ENCODE measurements at regions of chr1 and their contacts with region 1.

Region 1: DNA sequence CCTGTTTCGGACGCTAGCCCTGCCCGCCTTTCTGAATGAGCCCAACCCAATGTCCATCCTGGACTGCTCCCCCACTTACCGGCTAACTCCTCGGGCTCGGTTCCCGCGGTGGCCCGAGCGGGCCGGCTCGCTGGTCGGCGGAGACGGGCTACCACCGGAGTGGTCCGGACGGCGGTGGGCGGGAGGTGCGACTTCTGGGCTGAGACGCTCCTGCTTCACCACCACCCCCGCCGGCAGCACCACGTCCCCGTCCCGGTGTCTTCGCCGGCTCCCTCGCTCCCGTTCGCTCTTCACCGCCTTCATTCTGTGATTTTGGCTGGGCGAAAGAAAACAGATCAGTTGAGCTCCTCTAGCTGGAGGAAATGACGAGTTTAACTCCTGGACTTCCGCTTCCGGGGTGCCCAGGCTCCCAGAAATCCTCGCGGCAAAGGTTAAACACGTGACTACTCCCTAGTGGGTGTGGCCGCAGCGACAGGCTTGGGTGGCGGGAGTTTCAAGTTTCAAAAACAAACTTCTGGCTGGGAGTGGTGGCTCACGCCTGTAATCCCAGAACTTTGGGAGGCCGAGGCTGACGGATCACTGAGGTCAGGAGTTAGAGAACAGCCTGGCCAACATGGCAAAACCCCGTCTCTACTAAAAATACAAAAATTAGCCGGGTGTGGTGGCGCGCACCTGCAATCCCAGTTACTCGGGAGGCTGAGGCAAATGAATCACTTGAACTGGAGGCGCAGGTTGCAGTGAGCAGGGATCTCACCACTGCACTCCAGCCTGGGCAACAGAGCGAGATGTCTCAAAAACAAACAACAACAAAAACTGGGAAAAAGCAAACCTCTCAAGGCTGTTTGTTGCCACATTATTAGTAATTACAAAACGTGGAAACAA is at the start of gene SNIP1:
- DNase-seq: peak; percentile 91 to 94 (median 93)
- ATAC-seq: peak; percentile 95 to 97 (median 96)
- H3K4me3 ChIP-seq: peak within 1 kb of the TSS; percentile 76 to 100 (median 95)
- H3K27ac ChIP-seq: peak within 1 kb of the TSS; percentile 68 to 94 (median 86)
- H3K4me1 ChIP-seq: peaks cover 6 to 49% (median 32%) of the 10 kb centered on the region in 12 donors
- H3K27me3 ChIP-seq: no peaks in the 10 kb centered on the region
- CTCF ChIP-seq: no peak
- POLR2A ChIP-seq: peak in 1 of 2 donors; percentile 72
- total RNA-seq, gene SNIP1: 6.8 to 11.2 (median 9.0) TPM

Region 2: GRCh38 chr1:37514350-37515184 is 39.6 kb before region 1 on chr1 and contains the start of gene MEAF6:
- intact Hi-C with region 1: loop called in 3 of 10 experiments (anchors 2 to 5 kb)
- DNase-seq: peak; percentile 84 to 93 (median 88)
- ATAC-seq: peak; percentile 83 to 99 (median 98)
- H3K4me3 ChIP-seq: peak within 1 kb of the TSS; percentile 77 to 100 (median 88)
- H3K27ac ChIP-seq: peak within 1 kb of the TSS; percentile 80 to 99 (median 95)
- H3K4me1 ChIP-seq: peaks cover 0 to 30% (median 20%) of the 10 kb centered on the region in 12 donors
- H3K27me3 ChIP-seq: no peaks in the 10 kb centered on the region
- CTCF ChIP-seq: peak; percentile 41 to 96 (median 80)
- POLR2A ChIP-seq: peak in 1 of 2 donors; percentile 78
- total RNA-seq, gene MEAF6: 28.9 to 51.3 (median 39.6) TPM

Region 3: DNA sequence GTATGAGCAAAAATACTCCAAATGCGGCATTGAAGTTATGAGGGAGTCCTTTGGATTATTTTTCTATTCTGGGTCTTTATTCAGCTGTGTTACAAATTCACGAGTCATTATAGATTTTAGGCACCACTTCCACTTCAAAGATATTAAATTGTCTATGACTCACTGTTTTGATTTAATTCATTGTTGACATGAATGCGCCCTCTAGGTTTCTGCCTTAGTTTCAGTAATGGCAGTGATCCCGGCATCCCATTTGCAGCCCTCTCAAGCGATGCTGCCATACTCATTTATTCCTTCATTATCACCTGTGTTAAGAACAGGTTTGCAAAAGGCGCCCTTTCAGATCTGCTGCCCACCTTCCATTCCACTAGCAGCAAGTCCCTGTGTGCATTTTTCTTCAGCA is 66.5 kb after region 1 on chr1:
- intact Hi-C with region 1: no loop called
- DNase-seq: no peak
- ATAC-seq: no peak
- H3K4me3 ChIP-seq: no peak overlapping the region
- H3K27ac ChIP-seq: no peak overlapping the region
- H3K4me1 ChIP-seq: no peaks in the 10 kb centered on the region
- H3K27me3 ChIP-seq: peaks cover 0 to 74% (median 31%) of the 10 kb centered on the region in 9 donors
- CTCF ChIP-seq: no peak
- POLR2A ChIP-seq: no peak

Measured in heart left ventricle (tissue), 16 donors.